Endothelial cell of umbilical vein (primary cell): ENCODE measurements at regions of chr5 and their contacts with region 1.

Region 1: DNA sequence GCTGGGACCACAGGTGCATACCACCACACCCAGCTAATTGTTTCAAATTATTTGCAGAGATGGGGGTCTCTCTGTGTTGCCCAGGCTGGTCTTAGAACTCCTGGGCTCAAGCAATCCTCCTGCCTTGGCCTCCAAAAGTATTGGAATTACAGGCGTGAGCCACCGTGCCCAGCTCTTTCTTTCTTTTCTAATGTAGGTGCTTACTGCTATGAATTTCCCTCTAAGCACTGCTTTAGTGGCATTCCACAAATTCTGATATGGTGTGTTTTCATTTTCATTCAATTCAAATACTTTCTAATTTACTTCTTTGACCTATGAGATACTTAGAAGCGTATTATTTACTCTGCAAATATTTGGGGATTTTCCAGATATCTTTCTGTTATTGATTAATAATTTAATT is 14.9 kb downstream of the HMGXB3 start:
- DNase-seq: no peak
- H3K4me3 ChIP-seq: no peak overlapping the region
- H3K27ac ChIP-seq: no peak overlapping the region
- H3K4me1 ChIP-seq: peaks cover 23% of the 10 kb centered on the region
- H3K27me3 ChIP-seq: no peaks in the 10 kb centered on the region
- CTCF ChIP-seq: no peak
- POLR2A ChIP-seq: no peak

Region 2: DNA sequence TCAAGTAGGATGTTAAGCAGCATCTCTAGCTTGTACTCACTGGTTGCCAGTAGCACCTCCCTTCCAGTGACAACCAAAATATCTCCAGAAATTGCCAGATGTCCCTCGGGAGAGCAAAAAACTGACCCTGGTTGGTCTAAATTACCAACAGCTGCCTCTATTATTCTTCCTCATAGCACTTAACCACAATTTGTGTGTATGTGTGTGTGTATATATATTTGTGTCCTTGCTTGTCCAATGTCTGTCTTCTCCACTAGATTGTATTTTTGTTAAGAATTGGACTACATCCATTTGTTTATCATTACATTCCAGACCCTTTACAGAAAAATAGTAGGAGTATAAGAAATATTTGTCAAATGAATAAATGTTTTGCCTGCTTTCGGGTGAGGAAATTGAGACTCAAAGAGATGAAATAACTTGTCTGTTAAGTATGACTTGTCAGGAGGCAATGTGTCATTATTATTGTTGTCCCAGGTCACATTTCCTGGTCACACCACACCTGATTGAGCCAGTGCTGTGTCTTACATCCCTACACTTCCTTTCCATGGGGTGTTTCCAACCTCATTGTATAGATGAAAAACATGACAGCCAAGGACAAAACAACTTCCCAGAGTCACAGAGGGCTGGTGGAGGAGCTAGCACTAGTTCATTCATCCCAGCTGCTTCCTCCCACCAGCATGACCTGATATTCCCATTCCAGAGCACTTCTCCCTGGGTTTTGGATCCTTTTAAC is 681.5 kb before region 1 on chr5:
- CTCF ChIA-PET with region 1: no interaction called
- POLR2A ChIA-PET with region 1: interaction called, 10 read pairs
- dilution Hi-C with region 1: no loop called
- intact Hi-C with region 1: no loop called
- DNase-seq: peak; percentile 79
- H3K4me3 ChIP-seq: no peak overlapping the region
- H3K27ac ChIP-seq: peak overlapping the region; percentile 68
- H3K4me1 ChIP-seq: peaks cover 20% of the 10 kb centered on the region
- H3K27me3 ChIP-seq: no peaks in the 10 kb centered on the region
- CTCF ChIP-seq: no peak
- POLR2A ChIP-seq: no peak